ENCODE measurements at regions of chr9 and their contacts with region 1.

Region 1: GRCh38 chr9:136865735-136866103 is 389 bp downstream of the EDF1 start:
- DNase-seq: peak; percentile 74
- H3K4me3 ChIP-seq: peak overlapping the region; percentile 93 to 100 (median 100)
- H3K27ac ChIP-seq: peak overlapping the region; percentile 90 to 97 (median 94)
- H3K4me1 ChIP-seq: peaks cover 0 to 29% (median 21%) of the 10 kb centered on the region in 4 donors
- H3K27me3 ChIP-seq: no peaks in the 10 kb centered on the region
- CTCF ChIP-seq: no peak
- EP300 ChIP-seq: no peak
- POLR2A ChIP-seq: no peak

Region 2: GRCh38 chr9:136849038-136849959 is 16.4 kb before region 1 on chr9 and contains the start of gene PHPT1:
- intact Hi-C with region 1: loop called (anchors 2 kb)
- DNase-seq: peak; percentile 100
- H3K4me3 ChIP-seq: peak within 1 kb of the TSS; percentile 68 to 82 (median 70)
- H3K27ac ChIP-seq: peak within 1 kb of the TSS; percentile 87 to 93 (median 90)
- H3K4me1 ChIP-seq: peaks cover 0 to 56% (median 51%) of the 10 kb centered on the region in 4 donors
- H3K27me3 ChIP-seq: peaks cover 24 to 40% (median 39%) of the 10 kb centered on the region in 3 donors
- CTCF ChIP-seq: no peak
- EP300 ChIP-seq: no peak
- POLR2A ChIP-seq: peak; percentile 58 to 90
- total RNA-seq, gene PHPT1: 39.0 to 73.1 (median 56.4) TPM

Region 3: DNA sequence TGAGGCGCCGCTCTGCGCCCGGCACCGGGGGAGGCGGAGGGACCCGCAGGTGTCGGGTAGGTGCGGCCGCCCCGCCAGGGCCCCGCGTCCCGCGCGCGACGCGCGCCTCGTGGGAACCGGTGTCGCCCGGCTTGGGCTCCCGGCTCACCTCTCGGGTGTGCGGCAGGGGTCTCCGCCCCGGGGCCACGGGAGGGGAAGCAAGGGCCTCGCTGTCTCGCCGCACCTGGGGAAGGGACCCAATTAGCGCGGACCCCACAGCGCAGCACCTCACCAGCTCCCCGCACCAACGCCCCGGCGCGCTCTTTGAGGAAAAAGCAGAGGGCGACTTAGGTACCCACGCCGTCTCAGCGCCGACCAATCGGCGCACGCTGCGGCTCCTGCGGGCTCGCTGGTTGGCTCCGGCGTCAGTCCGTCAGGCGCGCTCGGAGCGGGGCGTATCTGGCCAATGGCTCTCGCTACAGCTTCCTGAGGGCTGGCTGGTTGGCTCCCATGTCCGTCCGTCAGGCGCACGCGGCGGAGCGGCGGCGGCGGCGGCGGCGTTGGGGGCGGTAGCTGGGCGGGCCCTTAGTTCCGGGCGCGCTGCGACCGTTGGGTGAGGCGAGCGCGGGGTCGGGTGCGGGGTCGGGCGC is 20.3 kb after region 1 on chr9 and contains the start of gene TRAF2:
- intact Hi-C with region 1: loop called (anchors 2 kb)
- DNase-seq: peak; percentile 99
- H3K4me3 ChIP-seq: peak within 1 kb of the TSS; percentile 70 to 99 (median 98)
- H3K27ac ChIP-seq: peak within 1 kb of the TSS; percentile 85 to 91 (median 88)
- H3K4me1 ChIP-seq: peaks cover 0 to 38% (median 32%) of the 10 kb centered on the region in 4 donors
- H3K27me3 ChIP-seq: no peaks in the 10 kb centered on the region
- CTCF ChIP-seq: no peak
- EP300 ChIP-seq: no peak
- POLR2A ChIP-seq: no peak
- total RNA-seq, gene TRAF2: 1.8 to 5.5 (median 3.9) TPM

Measured in sigmoid colon (tissue), 7 donors.